ENCODE measurements at regions of chr7 and their contacts with region 1.

Region 1: GRCh38 chr7:43071604-43072003 is 40.8 kb upstream of the HECW1 start:
- DNase-seq: no peak
- H3K4me3 ChIP-seq: no peak overlapping the region
- H3K27ac ChIP-seq: no peak overlapping the region
- H3K4me1 ChIP-seq: no peaks in the 10 kb centered on the region
- H3K27me3 ChIP-seq: no peaks in the 10 kb centered on the region
- CTCF ChIP-seq: peak; percentile 27 to 35

Region 2: GRCh38 chr7:42432644-42433043 is 639.0 kb before region 1 on chr7:
- CTCF ChIA-PET with region 1: no interaction called
- dilution Hi-C with region 1: no loop called
- in situ Hi-C with region 1: no loop called
- intact Hi-C with region 1: no loop called
- DNase-seq: no peak
- H3K4me3 ChIP-seq: no peak overlapping the region
- H3K27ac ChIP-seq: no peak overlapping the region
- H3K4me1 ChIP-seq: peaks cover 3% of the 10 kb centered on the region
- H3K27me3 ChIP-seq: peaks cover 2% of the 10 kb centered on the region
- CTCF ChIP-seq: no peak

Region 3: GRCh38 chr7:43038254-43038653 is 33.4 kb before region 1 on chr7:
- CTCF ChIA-PET with region 1: no interaction called
- dilution Hi-C with region 1: no loop called
- in situ Hi-C with region 1: no loop called
- intact Hi-C with region 1: no loop called
- DNase-seq: peak; percentile 29
- H3K4me3 ChIP-seq: no peak overlapping the region
- H3K27ac ChIP-seq: no peak overlapping the region
- H3K4me1 ChIP-seq: no peaks in the 10 kb centered on the region
- H3K27me3 ChIP-seq: no peaks in the 10 kb centered on the region
- CTCF ChIP-seq: no peak

Region 4: DNA sequence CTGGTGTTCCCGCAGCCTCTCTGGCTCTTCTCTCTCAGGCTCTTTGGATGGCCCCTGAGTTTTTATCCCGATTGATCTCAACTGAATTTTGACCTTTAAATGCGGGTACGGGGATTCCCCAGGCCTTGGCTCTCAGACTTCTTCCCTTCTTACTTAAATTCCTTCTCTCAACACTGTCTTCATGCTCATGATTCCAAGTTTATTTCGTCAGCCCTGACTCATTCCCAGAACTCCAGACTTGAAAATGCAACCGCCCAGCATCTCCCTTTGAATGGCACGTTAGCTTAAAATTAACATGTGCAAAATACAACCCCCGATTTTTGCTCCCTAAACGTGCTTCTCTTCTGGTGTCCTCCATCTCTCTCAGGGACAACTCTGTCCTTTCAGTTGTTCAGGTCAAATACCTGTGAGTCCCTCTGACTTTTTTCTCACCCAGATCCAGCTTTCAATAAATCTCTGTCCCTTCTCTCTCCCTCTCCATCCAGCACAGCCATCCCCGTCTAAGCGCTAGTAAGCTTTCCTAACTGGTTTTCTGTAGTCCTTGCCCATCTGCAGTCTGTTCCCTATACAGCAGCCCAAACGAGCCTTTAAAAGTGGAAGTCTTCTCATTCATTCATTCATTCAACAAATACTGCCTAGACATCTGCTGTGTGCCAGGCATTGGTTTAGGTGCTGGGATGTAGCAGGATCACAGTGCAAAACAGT is 47.9 kb after region 1 on chr7:
- CTCF ChIA-PET with region 1: no interaction called
- dilution Hi-C with region 1: loop called (anchors 5 kb)
- in situ Hi-C with region 1: no loop called
- intact Hi-C with region 1: no loop called
- DNase-seq: no peak
- H3K4me3 ChIP-seq: no peak overlapping the region
- H3K27ac ChIP-seq: no peak overlapping the region
- H3K4me1 ChIP-seq: no peaks in the 10 kb centered on the region
- H3K27me3 ChIP-seq: peaks cover 16% of the 10 kb centered on the region
- CTCF ChIP-seq: no peak